ENCODE measurements at regions of chr1 and their contacts with region 1.

Region 1: GRCh38 chr1:56516539-56517252 is 62.7 kb downstream of the PLPP3 start:
- DNase-seq: peak; percentile 43
- ATAC-seq: peak; percentile 96
- H3K4me3 ChIP-seq: peak overlapping the region; percentile 14; the same call in 1 of the 2 replicates
- H3K27ac ChIP-seq: peak overlapping the region; percentile 45; the same call in 1 of the 2 replicates
- H3K4me1 ChIP-seq: peaks cover 32% of the 10 kb centered on the region
- H3K27me3 ChIP-seq: no peaks in the 10 kb centered on the region; a peak in 2 of 4 replicates
- CTCF ChIP-seq: no peak
- EP300 ChIP-seq: peak in 1 of 2 experiments; percentile 10; a peak in 1 of 4 replicates
- POLR2A ChIP-seq: peak; percentile 34; the same call in 1 of the 2 replicates
- RAD21 ChIP-seq: no peak

Region 2: GRCh38 chr1:56469640-56470371 is 46.9 kb before region 1 on chr1:
- CTCF ChIA-PET with region 1: interaction called, 3 read pairs
- POLR2A ChIA-PET with region 1: interaction called, 7 read pairs
- RAD21 ChIA-PET with region 1: interaction called, 25 read pairs
- SMC1A ChIA-PET with region 1: interaction called, 16 read pairs
- in situ Hi-C with region 1: no loop called
- intact Hi-C with region 1: no loop called
- DNase-seq: no peak
- ATAC-seq: peak; percentile 58
- H3K4me3 ChIP-seq: no peak overlapping the region
- H3K27ac ChIP-seq: no peak overlapping the region
- H3K4me1 ChIP-seq: peaks cover 8% of the 10 kb centered on the region; the same call in 1 of the 2 replicates
- H3K27me3 ChIP-seq: no peaks in the 10 kb centered on the region
- CTCF ChIP-seq: no peak
- EP300 ChIP-seq: no peak
- POLR2A ChIP-seq: no peak
- RAD21 ChIP-seq: no peak

Region 3: GRCh38 chr1:56533621-56534020 is 16.9 kb after region 1 on chr1:
- CTCF ChIA-PET with region 1: interaction called, 4 read pairs
- POLR2A ChIA-PET with region 1: interaction called, 10 read pairs
- RAD21 ChIA-PET with region 1: interaction called, 3 read pairs
- SMC1A ChIA-PET with region 1: interaction called, 9 read pairs
- in situ Hi-C with region 1: no loop called
- intact Hi-C with region 1: no loop called
- DNase-seq: no peak
- ATAC-seq: peak; percentile 82
- H3K4me3 ChIP-seq: no peak overlapping the region
- H3K27ac ChIP-seq: no peak overlapping the region
- H3K4me1 ChIP-seq: peaks cover 2% of the 10 kb centered on the region; the same call in 1 of the 2 replicates
- H3K27me3 ChIP-seq: no peaks in the 10 kb centered on the region
- CTCF ChIP-seq: no peak
- EP300 ChIP-seq: no peak
- POLR2A ChIP-seq: no peak
- RAD21 ChIP-seq: no peak

Region 4: GRCh38 chr1:56562891-56563452 is 46.3 kb after region 1 on chr1:
- CTCF ChIA-PET with region 1: interaction called, 3 read pairs
- POLR2A ChIA-PET with region 1: interaction called, 3 read pairs
- RAD21 ChIA-PET with region 1: interaction called, 16 read pairs
- SMC1A ChIA-PET with region 1: interaction called, 10 read pairs
- in situ Hi-C with region 1: no loop called
- intact Hi-C with region 1: no loop called
- DNase-seq: no peak
- ATAC-seq: no peak
- H3K4me3 ChIP-seq: no peak overlapping the region
- H3K27ac ChIP-seq: no peak overlapping the region
- H3K4me1 ChIP-seq: no peaks in the 10 kb centered on the region; the same call in 1 of the 2 replicates
- H3K27me3 ChIP-seq: no peaks in the 10 kb centered on the region
- CTCF ChIP-seq: no peak
- EP300 ChIP-seq: no peak
- POLR2A ChIP-seq: no peak
- RAD21 ChIP-seq: no peak

Region 5: DNA sequence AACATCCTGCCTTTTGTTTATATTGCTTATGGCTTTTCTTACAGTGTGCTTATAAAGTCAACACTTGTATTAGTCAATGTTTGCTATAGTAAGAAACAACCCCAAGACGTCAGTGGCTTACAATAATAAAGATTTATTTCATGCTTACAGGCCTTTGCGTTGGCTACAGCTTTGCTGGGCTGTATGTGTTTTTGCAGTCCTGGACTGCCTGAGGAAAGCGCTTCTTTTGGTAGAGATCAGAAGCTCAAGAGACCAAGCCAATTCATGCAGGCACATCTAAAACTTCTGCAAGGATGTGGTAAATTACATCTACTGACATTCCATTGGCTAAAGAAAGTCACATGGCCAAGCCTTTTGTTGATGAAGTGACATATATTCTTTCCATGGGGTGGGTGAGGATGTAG is 110.9 kb after region 1 on chr1:
- CTCF ChIA-PET with region 1: no interaction called
- POLR2A ChIA-PET with region 1: no interaction called
- RAD21 ChIA-PET with region 1: no interaction called
- SMC1A ChIA-PET with region 1: no interaction called
- in situ Hi-C with region 1: no loop called
- intact Hi-C with region 1: no loop called
- DNase-seq: no peak
- ATAC-seq: no peak
- H3K4me3 ChIP-seq: no peak overlapping the region
- H3K27ac ChIP-seq: no peak overlapping the region
- H3K4me1 ChIP-seq: no peaks in the 10 kb centered on the region
- H3K27me3 ChIP-seq: no peaks in the 10 kb centered on the region
- CTCF ChIP-seq: no peak
- EP300 ChIP-seq: no peak
- POLR2A ChIP-seq: no peak
- RAD21 ChIP-seq: no peak

Region 6: DNA sequence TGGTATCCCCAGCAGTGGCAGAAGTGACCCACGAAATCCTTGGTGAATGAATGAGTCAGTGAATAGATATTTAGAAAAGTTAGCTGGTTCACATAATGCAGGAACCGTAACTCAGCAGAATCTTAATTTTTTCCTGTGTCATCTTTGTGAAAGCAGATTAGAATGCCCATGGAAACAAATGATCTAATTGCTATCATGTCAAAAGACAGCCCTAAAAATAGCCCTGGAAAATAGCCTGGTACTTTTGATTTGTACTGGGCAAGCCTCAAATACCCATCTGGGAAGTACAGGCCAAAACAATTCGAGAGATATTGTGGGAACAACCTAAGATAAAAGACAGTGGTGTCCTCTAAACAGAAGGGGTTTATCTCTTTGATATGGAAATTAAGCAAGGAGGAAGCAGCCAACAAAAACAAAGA is 281.4 kb after region 1 on chr1:
- CTCF ChIA-PET with region 1: no interaction called
- POLR2A ChIA-PET with region 1: no interaction called
- RAD21 ChIA-PET with region 1: no interaction called
- SMC1A ChIA-PET with region 1: no interaction called
- in situ Hi-C with region 1: no loop called
- intact Hi-C with region 1: no loop called
- DNase-seq: no peak
- ATAC-seq: no peak
- H3K4me3 ChIP-seq: no peak overlapping the region
- H3K27ac ChIP-seq: no peak overlapping the region
- H3K4me1 ChIP-seq: no peaks in the 10 kb centered on the region
- H3K27me3 ChIP-seq: peaks cover 0 to 2% of the 10 kb centered on the region in 2 experiments; a peak in 1 of 4 replicates
- CTCF ChIP-seq: no peak
- EP300 ChIP-seq: no peak
- POLR2A ChIP-seq: no peak
- RAD21 ChIP-seq: no peak